ENCODE measurements at regions of chr13 and their contacts with region 1.

Region 1: GRCh38 chr13:38872693-38873092 is 117.9 kb downstream of the STOML3 start:
- DNase-seq: peak; percentile 35
- ATAC-seq: peak; percentile 71
- H3K4me3 ChIP-seq: no peak overlapping the region
- H3K27ac ChIP-seq: no peak overlapping the region
- H3K4me1 ChIP-seq: no peaks in the 10 kb centered on the region
- H3K27me3 ChIP-seq: no peaks in the 10 kb centered on the region
- CTCF ChIP-seq: peak; percentile 61
- EP300 ChIP-seq: no peak
- POLR2A ChIP-seq: no peak
- RAD21 ChIP-seq: no peak

Region 2: GRCh38 chr13:38819053-38819452 is 53.6 kb before region 1 on chr13:
- CTCF ChIA-PET with region 1: no interaction called
- POLR2A ChIA-PET with region 1: no interaction called
- in situ Hi-C with region 1: loop called (anchors 10 kb)
- intact Hi-C with region 1: no loop called
- DNase-seq: no peak
- ATAC-seq: no peak
- H3K4me3 ChIP-seq: no peak overlapping the region
- H3K27ac ChIP-seq: no peak overlapping the region
- H3K4me1 ChIP-seq: no peaks in the 10 kb centered on the region
- H3K27me3 ChIP-seq: no peaks in the 10 kb centered on the region
- CTCF ChIP-seq: no peak
- EP300 ChIP-seq: no peak
- POLR2A ChIP-seq: no peak
- RAD21 ChIP-seq: no peak

Region 3: DNA sequence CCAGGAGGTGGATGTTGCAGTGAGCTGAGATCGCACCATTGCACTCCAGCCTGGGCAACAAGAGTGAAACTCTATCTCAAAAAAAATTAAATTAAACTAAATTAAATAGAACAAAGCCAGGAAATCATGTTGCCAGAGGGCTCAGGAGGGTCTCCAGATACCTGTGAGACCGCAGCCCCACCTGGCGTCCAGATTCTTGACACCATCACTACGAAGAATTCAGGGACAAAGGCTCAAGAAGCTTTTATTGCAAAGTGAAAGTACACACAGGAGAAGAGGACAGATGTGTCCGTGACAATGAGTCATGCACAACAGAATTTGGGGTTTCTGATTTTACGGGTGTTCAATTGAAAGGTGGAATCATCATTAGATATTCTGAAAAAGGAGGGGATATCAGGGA is 41.4 kb after region 1 on chr13:
- CTCF ChIA-PET with region 1: no interaction called
- POLR2A ChIA-PET with region 1: no interaction called
- in situ Hi-C with region 1: no loop called
- intact Hi-C with region 1: loop called (anchors 5 kb)
- DNase-seq: no peak
- ATAC-seq: no peak
- H3K4me3 ChIP-seq: no peak overlapping the region
- H3K27ac ChIP-seq: no peak overlapping the region
- H3K4me1 ChIP-seq: peaks cover 8% of the 10 kb centered on the region
- H3K27me3 ChIP-seq: 0 out of 5 replicates have a peak, but pooled peaks cover 0 to 7% of the 10 kb centered on the region in 2 experiments
- CTCF ChIP-seq: 0 out of 2 replicates have a peak, but pooled peaks have one; percentile 9
- EP300 ChIP-seq: no peak
- POLR2A ChIP-seq: no peak
- RAD21 ChIP-seq: no peak

Region 4: DNA sequence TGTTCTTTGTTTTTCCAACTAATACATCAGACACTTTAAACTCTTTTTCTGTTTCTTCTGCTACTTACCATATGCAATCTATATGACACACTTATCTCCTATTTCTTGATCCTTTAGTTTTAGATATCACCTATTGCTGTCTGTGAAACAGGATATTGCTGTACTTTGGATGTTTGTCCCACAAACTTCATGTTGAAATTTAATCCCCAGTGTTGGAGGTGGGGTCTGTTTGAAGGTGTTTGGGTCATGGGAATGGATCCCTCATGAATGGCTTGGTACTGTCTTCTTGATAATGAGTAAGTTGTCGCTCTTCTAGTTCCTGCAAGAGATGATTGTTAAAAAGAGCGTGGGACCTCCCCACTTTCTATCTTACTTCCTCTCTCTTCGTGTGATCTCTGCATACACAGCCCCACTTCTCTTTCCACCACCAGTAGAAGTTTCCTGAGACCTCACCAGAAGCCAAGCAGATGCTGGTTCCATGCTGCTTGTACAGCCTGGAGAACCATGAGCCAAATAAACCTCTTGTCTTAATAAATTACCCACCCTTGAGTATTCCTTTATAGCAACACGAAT is 409.8 kb after region 1 on chr13:
- CTCF ChIA-PET with region 1: no interaction called
- POLR2A ChIA-PET with region 1: no interaction called
- in situ Hi-C with region 1: no loop called
- intact Hi-C with region 1: no loop called
- DNase-seq: no peak
- ATAC-seq: no peak
- H3K4me3 ChIP-seq: no peak overlapping the region
- H3K27ac ChIP-seq: no peak overlapping the region
- H3K4me1 ChIP-seq: peaks cover 25% of the 10 kb centered on the region
- H3K27me3 ChIP-seq: no peaks in the 10 kb centered on the region
- CTCF ChIP-seq: no peak
- EP300 ChIP-seq: no peak
- POLR2A ChIP-seq: no peak
- RAD21 ChIP-seq: no peak